Activated CD8-positive, alpha-beta T cell treated with anti-CD3 and anti-CD28 coated beads, Interleukin-2, amount 10 ng/mL, durations not matched to agents 7 days and 5 days (primary cell): ENCODE measurements at regions of chr18 and their contacts with region 1.

Region 1: GRCh38 chr18:58117786-58118403 is 73.9 kb downstream of the NEDD4L start:
- DNase-seq: no peak
- ATAC-seq: no peak
- H3K4me3 Mint-ChIP-seq: no peak overlapping the region
- H3K27ac Mint-ChIP-seq: no peak overlapping the region
- H3K4me1 Mint-ChIP-seq: peaks cover 10% of the 10 kb centered on the region
- H3K27me3 Mint-ChIP-seq: peaks cover 2% of the 10 kb centered on the region

Region 2: GRCh38 chr18:57881818-57882413 is 236.0 kb before region 1 on chr18:
- CTCF ChIA-PET with region 1: interaction called, 20 read pairs
- POLR2A ChIA-PET with region 1: no interaction called
- DNase-seq: peak; percentile 70
- ATAC-seq: peak; percentile 82
- H3K4me3 Mint-ChIP-seq: no peak overlapping the region
- H3K27ac Mint-ChIP-seq: no peak overlapping the region
- H3K4me1 Mint-ChIP-seq: no peaks in the 10 kb centered on the region
- H3K27me3 Mint-ChIP-seq: peaks cover 2% of the 10 kb centered on the region

Region 3: GRCh38 chr18:57959278-57959677 is 158.6 kb before region 1 on chr18:
- CTCF ChIA-PET with region 1: interaction called, 10 read pairs
- POLR2A ChIA-PET with region 1: no interaction called
- DNase-seq: no peak
- ATAC-seq: no peak
- H3K4me3 Mint-ChIP-seq: no peak overlapping the region
- H3K27ac Mint-ChIP-seq: no peak overlapping the region
- H3K4me1 Mint-ChIP-seq: peaks cover 4% of the 10 kb centered on the region
- H3K27me3 Mint-ChIP-seq: peaks cover 28% of the 10 kb centered on the region

Region 4: DNA sequence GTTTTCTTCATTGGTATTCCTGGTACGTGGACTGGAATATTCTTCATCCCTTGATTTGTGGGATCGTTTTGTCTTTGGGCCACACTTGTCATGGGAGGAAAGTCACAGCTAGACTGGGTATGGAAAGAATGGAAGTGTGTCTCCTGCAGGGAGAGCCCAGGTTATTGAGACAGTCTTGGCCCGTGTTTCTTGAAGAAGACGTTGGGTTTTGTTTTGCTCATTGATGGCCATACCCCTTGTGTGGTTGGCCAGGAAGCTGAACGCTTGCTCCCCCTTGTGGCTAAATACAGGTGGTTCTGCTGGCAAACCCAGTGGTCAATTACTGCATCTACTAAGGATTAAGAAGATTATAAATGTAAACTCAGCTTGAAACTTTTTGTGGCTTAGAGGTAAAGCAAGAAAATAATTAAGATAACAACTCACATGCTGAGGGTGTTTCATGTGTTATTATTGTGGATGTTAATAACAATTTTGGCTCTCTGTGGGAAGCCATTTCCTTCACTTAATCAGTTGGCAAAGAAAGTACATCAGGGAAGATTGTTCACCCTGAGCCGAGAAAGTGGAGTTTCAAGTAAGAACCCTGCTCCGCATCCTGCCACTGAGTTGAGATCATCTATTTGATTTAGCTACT is 17.9 kb after region 1 on chr18:
- CTCF ChIA-PET with region 1: interaction called, 12 read pairs
- POLR2A ChIA-PET with region 1: no interaction called
- DNase-seq: peak; percentile 68
- ATAC-seq: peak; percentile 86
- H3K4me3 Mint-ChIP-seq: no peak overlapping the region
- H3K27ac Mint-ChIP-seq: no peak overlapping the region
- H3K4me1 Mint-ChIP-seq: peaks cover 20% of the 10 kb centered on the region
- H3K27me3 Mint-ChIP-seq: peaks cover 14% of the 10 kb centered on the region

Region 5: GRCh38 chr18:58223717-58224424 is 106.0 kb after region 1 on chr18:
- CTCF ChIA-PET with region 1: no interaction called
- POLR2A ChIA-PET with region 1: no interaction called
- DNase-seq: no peak
- ATAC-seq: no peak
- H3K4me3 Mint-ChIP-seq: no peak overlapping the region
- H3K27ac Mint-ChIP-seq: no peak overlapping the region
- H3K4me1 Mint-ChIP-seq: no peaks in the 10 kb centered on the region
- H3K27me3 Mint-ChIP-seq: peaks cover 8% of the 10 kb centered on the region

Region 6: GRCh38 chr18:58364876-58365528 is 247.1 kb after region 1 on chr18:
- CTCF ChIA-PET with region 1: no interaction called
- POLR2A ChIA-PET with region 1: no interaction called
- DNase-seq: no peak
- ATAC-seq: no peak
- H3K4me3 Mint-ChIP-seq: no peak overlapping the region
- H3K27ac Mint-ChIP-seq: no peak overlapping the region
- H3K4me1 Mint-ChIP-seq: no peaks in the 10 kb centered on the region
- H3K27me3 Mint-ChIP-seq: no peaks in the 10 kb centered on the region